ENCODE measurements at regions of chr6 and their contacts with region 1.

Region 1: GRCh38 chr6:52419809-52420670 is at the start of gene EFHC1:
- DNase-seq: peak; percentile 96 to 99 (median 98)
- ATAC-seq: peak; percentile 90
- H3K4me3 Mint-ChIP-seq: no peak within 1 kb of the TSS
- H3K27ac Mint-ChIP-seq: no peak within 1 kb of the TSS
- H3K4me1 Mint-ChIP-seq: peaks cover 6 to 34% (median 16%) of the 10 kb centered on the region in 4 donors
- H3K27me3 Mint-ChIP-seq: no peaks in the 10 kb centered on the region
- polyA plus RNA-seq, gene EFHC1: 2.5 to 5.1 (median 2.9) TPM

Region 2: DNA sequence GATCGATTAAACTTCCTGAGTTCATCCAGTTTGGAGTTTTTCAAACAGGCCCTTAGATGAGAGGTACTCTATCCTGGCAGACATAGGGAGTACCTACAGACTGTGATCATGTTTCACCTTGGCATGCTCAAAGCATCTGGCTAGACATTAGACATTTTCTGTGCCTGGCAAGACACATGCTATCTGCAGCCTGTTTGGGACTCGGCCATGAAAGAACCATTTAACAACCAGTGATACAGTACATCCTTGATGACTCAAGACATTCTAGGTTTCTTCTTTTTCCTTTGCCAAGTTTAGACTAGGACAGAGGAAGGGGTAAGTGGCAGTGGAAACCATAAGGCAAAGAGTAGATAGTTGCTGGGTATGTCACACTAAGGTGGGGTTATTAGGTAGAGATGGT is 73.5 kb before region 1 on chr6:
- POLR2A ChIA-PET with region 1: no interaction called
- DNase-seq: no peak
- ATAC-seq: no peak
- H3K4me3 Mint-ChIP-seq: no peak overlapping the region
- H3K27ac Mint-ChIP-seq: peak overlapping the region in 2 of 10 donors; percentile 7 to 23
- H3K4me1 Mint-ChIP-seq: peaks cover 24 to 37% (median 27%) of the 10 kb centered on the region in 4 donors
- H3K27me3 Mint-ChIP-seq: no peaks in the 10 kb centered on the region

Region 3: DNA sequence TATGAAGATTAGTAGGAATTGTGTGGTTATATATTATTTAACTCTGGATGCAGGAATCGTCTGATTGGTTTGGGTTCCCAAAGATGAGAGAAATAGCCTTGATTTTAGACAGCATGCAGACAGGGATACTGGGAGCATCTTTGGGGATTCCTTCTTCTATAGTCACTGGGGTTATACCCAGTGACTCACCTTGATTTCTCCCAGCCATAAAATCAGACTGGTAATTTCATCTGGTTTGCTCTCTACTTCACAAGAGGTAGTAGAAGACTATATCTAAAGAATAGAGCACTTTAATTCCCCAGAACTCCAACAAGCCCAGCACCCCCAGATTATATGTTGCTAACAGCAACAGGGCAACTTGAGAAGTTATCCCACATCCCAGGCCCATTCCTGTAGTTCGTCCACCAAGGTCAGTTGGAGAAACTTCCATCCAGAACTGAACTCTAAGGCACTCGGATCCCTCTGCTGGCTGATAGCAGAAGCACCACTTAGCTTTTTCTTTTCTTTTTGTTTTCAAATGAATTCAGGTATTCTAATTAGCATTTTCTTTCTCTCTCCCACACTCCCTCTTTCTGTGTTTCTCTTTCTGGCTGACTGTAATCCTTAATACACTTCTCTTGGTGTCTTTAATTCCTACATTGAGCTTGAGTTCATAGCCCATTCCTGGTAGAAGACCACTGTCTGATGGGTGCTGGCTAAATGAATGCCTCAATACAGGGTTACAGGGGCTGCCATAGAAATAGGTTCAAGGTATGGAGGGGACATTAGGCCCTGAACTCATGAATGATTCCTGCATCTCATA is 20.3 kb before region 1 on chr6:
- POLR2A ChIA-PET with region 1: interaction called, 13 read pairs
- DNase-seq: peak in 5 of 10 donors; percentile 39 to 64 (median 54)
- ATAC-seq: peak; percentile 24 to 27
- H3K4me3 Mint-ChIP-seq: peak overlapping the region; percentile 42 to 83 (median 68)
- H3K27ac Mint-ChIP-seq: peak overlapping the region; percentile 93 to 100 (median 96)
- H3K4me1 Mint-ChIP-seq: peaks cover 49 to 86% (median 72%) of the 10 kb centered on the region in 4 donors
- H3K27me3 Mint-ChIP-seq: no peaks in the 10 kb centered on the region

Region 4: DNA sequence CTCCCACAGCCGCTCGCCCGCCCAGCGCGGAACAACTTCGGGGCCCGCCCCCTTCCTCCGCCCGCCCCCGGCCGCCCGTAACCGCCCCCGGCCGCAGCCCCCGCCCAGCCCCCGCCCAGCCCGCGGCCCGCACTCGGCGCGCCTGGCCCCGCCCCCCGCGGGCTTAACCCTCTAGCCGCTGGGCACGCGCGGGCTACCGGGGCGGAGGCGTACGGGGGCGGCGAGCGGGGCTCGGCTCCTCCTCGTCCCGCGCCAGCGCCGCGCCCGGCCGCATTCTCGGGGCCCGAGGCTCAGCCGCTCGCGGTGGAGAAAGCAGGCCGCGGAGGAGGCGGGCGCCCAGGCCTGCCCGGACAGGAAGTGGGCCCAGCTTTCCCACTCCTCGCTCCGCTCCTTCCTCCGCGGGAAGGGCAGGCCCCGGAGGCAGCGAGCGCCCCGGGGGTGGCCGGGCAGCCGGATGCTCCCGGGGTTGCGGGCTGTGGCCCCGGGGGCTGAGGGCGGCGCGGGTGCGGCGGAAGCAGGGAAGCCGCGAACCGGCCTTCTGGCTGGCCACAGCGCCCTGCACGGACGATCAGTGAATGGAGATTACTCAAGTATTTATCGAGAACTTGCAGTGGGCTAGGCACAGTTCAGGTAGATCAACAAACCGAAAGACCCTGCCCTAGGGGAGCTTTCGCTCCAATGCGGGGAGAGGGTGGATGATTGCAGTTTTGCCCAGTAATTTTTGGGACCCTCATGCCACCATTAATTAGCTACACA is 157.2 kb after region 1 on chr6 and contains the start of gene TRAM2:
- POLR2A ChIA-PET with region 1: interaction called, 16 read pairs
- DNase-seq: peak; percentile 67 to 89 (median 78)
- ATAC-seq: peak; percentile 69 to 74
- H3K4me3 Mint-ChIP-seq: peak within 1 kb of the TSS; percentile 78 to 92 (median 87)
- H3K27ac Mint-ChIP-seq: peak within 1 kb of the TSS; percentile 75 to 96 (median 88)
- H3K4me1 Mint-ChIP-seq: peaks cover 29 to 51% (median 43%) of the 10 kb centered on the region in 4 donors
- H3K27me3 Mint-ChIP-seq: no peaks in the 10 kb centered on the region
- polyA plus RNA-seq, gene TRAM2: 3.1 to 4.9 (median 3.3) TPM